ENCODE measurements at regions of chr4 and their contacts with region 1.

Region 1: GRCh38 chr4:142846729-142847596 is 862 bp upstream of the INPP4B start:
- DNase-seq: peak; percentile 72 to 79 (median 75)
- H3K4me3 ChIP-seq: peak overlapping the region; percentile 73 to 77
- H3K4me3 Mint-ChIP-seq: peak overlapping the region; percentile 83 to 94 (median 89)
- H3K27ac ChIP-seq: no peak overlapping the region
- H3K27ac Mint-ChIP-seq: peak overlapping the region in 4 of 7 donors; percentile 23 to 66 (median 44)
- H3K4me1 ChIP-seq: peaks cover 12% of the 10 kb centered on the region
- H3K4me1 Mint-ChIP-seq: peaks cover 8 to 18% (median 12%) of the 10 kb centered on the region in 4 donors
- H3K27me3 ChIP-seq: no peaks in the 10 kb centered on the region
- H3K27me3 Mint-ChIP-seq: peaks cover 7 to 14% of the 10 kb centered on the region in 2 donors

Region 2: DNA sequence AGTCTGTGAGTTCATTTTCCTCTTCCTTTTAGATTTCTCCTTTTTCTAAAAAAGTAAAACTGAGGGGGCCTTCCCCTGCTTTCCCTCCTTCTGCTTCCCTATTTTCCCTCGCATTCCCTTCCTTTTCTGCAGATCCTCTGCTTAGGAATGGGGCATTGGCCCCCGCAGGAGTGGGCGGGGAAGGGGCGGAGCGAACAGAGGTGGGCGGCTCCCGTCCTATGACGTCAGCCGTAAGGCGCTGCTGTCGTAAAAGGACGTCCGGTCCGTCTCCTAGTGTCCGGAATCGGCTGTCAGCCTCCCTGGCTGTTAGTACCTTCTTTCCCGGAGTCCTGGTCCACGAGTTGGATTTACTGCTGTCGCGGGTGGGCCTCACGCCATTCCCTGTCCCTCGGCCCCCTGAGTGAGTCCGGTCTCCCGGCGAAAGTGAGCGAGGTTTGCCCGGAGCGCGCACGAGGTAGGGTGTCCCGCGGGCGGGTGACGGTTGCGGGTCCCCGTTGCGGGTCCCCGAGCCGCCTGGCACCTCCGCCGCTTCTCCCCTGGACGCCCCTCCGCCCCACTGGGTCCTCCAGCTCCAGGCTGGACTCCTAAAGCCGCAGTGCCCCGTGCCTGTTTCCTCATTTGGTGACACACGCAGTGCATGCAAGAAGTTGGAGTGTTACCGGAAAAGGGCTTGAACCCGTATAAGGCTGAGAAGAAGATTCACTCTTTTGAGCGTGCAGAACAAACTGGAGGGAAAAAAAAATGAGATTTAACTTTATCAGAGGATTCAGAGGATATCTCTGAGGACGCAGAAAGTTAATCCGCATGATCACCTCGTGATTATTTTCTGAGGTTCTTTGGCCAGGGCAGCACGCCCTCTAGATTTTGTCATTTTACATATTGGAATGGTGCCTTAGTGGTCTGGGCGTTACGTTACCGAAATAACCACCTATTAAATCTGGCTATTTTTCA is 1626.0 kb before region 1 on chr4 and contains the start of gene ZNF330:
- CTCF ChIA-PET with region 1: no interaction called
- POLR2A ChIA-PET with region 1: no interaction called
- intact Hi-C with region 1: loop called (anchors 5 kb)
- DNase-seq: peak; percentile 81 to 92 (median 87)
- H3K4me3 ChIP-seq: peak within 1 kb of the TSS; percentile 42 to 95
- H3K4me3 Mint-ChIP-seq: peak within 1 kb of the TSS; percentile 96 to 99 (median 98)
- H3K27ac ChIP-seq: peak within 1 kb of the TSS; percentile 92
- H3K27ac Mint-ChIP-seq: peak within 1 kb of the TSS; percentile 93 to 99 (median 97)
- H3K4me1 ChIP-seq: peaks cover 22% of the 10 kb centered on the region
- H3K4me1 Mint-ChIP-seq: peaks cover 27 to 49% (median 37%) of the 10 kb centered on the region in 4 donors
- H3K27me3 ChIP-seq: no peaks in the 10 kb centered on the region
- H3K27me3 Mint-ChIP-seq: no peaks in the 10 kb centered on the region
- total RNA-seq, gene ZNF330: 39.8 to 45.3 TPM

Region 3: DNA sequence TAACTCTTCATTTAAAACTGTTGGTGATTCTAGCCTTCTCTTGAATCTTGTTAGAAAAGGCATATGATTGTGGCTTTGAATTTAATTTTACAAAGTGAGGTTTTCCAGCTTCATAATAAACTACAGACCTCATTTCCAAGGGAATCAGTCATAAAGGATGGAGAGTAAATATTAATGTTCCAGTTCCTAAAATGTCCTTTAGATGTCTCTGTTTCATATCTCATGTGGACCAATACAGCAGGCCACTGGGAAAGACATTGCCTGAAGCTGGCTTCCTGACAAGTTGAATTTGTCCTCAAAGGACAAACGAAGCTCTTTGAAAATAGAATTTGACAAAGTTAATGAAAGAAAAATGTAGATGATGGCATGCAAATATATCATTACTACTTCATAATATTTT is 1500.8 kb before region 1 on chr4:
- CTCF ChIA-PET with region 1: interaction called, 12 read pairs
- POLR2A ChIA-PET with region 1: interaction called, 3 read pairs
- intact Hi-C with region 1: no loop called
- DNase-seq: no peak
- H3K4me3 ChIP-seq: no peak overlapping the region
- H3K4me3 Mint-ChIP-seq: no peak overlapping the region
- H3K27ac ChIP-seq: no peak overlapping the region
- H3K27ac Mint-ChIP-seq: no peak overlapping the region
- H3K4me1 ChIP-seq: no peaks in the 10 kb centered on the region
- H3K4me1 Mint-ChIP-seq: no peaks in the 10 kb centered on the region
- H3K27me3 ChIP-seq: no peaks in the 10 kb centered on the region
- H3K27me3 Mint-ChIP-seq: peaks cover 9 to 13% of the 10 kb centered on the region in 2 donors

Region 4: GRCh38 chr4:142126890-142127497 is 720.0 kb before region 1 on chr4:
- CTCF ChIA-PET with region 1: interaction called, 23 read pairs
- POLR2A ChIA-PET with region 1: interaction called, 10 read pairs
- intact Hi-C with region 1: loop called (anchors 1 kb)
- DNase-seq: peak; percentile 61 to 67 (median 65)
- H3K4me3 ChIP-seq: no peak overlapping the region
- H3K4me3 Mint-ChIP-seq: no peak overlapping the region
- H3K27ac ChIP-seq: no peak overlapping the region
- H3K27ac Mint-ChIP-seq: peak overlapping the region in 3 of 7 donors; percentile 54 to 57 (median 54)
- H3K4me1 ChIP-seq: peaks cover 31% of the 10 kb centered on the region
- H3K4me1 Mint-ChIP-seq: peaks cover 19 to 33% (median 26%) of the 10 kb centered on the region in 4 donors
- H3K27me3 ChIP-seq: no peaks in the 10 kb centered on the region
- H3K27me3 Mint-ChIP-seq: no peaks in the 10 kb centered on the region

Region 5: GRCh38 chr4:142719854-142720541 is 127.0 kb before region 1 on chr4:
- CTCF ChIA-PET with region 1: interaction called, 3 read pairs
- POLR2A ChIA-PET with region 1: no interaction called
- intact Hi-C with region 1: loop called (anchors 5 kb)
- DNase-seq: peak in 4 of 5 donors; percentile 54 to 60 (median 57)
- H3K4me3 ChIP-seq: no peak overlapping the region
- H3K4me3 Mint-ChIP-seq: peak overlapping the region in 5 of 8 donors; percentile 19 to 62 (median 49)
- H3K27ac ChIP-seq: no peak overlapping the region
- H3K27ac Mint-ChIP-seq: peak overlapping the region in 5 of 7 donors; percentile 36 to 77 (median 69)
- H3K4me1 ChIP-seq: peaks cover 14% of the 10 kb centered on the region
- H3K4me1 Mint-ChIP-seq: peaks cover 11 to 26% (median 13%) of the 10 kb centered on the region in 4 donors
- H3K27me3 ChIP-seq: no peaks in the 10 kb centered on the region
- H3K27me3 Mint-ChIP-seq: peaks cover 0 to 1% of the 10 kb centered on the region in 2 donors

Region 6: DNA sequence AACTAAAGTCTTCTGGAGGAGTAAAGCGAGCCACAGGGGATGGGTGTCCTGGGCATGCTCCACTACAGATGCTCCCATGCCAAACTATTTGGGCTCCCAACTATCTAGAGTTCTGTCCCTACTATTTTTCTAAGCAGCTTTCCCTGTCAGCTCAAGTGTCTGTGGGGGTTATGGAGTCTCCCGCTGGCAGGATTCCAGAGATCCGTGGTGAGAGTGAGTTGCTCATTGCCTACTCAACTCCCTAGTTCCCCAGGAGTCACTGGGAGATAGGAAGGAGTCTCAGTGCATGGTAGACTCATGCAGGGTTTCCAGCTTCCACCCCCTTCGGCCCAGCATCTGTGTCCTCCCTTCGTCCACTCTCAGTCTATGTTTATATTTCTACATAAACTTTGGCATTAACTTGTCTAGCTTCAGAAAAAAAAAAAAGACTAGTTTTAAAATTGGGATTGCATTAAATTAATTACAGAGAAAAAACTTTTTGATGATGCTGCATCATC is 54.3 kb after region 1 on chr4:
- CTCF ChIA-PET with region 1: no interaction called
- POLR2A ChIA-PET with region 1: no interaction called
- intact Hi-C with region 1: no loop called
- DNase-seq: no peak
- H3K4me3 ChIP-seq: no peak overlapping the region
- H3K4me3 Mint-ChIP-seq: no peak overlapping the region
- H3K27ac ChIP-seq: no peak overlapping the region
- H3K27ac Mint-ChIP-seq: no peak overlapping the region
- H3K4me1 ChIP-seq: no peaks in the 10 kb centered on the region
- H3K4me1 Mint-ChIP-seq: no peaks in the 10 kb centered on the region
- H3K27me3 ChIP-seq: no peaks in the 10 kb centered on the region
- H3K27me3 Mint-ChIP-seq: peaks cover 8 to 9% of the 10 kb centered on the region in 2 donors

Region 7: DNA sequence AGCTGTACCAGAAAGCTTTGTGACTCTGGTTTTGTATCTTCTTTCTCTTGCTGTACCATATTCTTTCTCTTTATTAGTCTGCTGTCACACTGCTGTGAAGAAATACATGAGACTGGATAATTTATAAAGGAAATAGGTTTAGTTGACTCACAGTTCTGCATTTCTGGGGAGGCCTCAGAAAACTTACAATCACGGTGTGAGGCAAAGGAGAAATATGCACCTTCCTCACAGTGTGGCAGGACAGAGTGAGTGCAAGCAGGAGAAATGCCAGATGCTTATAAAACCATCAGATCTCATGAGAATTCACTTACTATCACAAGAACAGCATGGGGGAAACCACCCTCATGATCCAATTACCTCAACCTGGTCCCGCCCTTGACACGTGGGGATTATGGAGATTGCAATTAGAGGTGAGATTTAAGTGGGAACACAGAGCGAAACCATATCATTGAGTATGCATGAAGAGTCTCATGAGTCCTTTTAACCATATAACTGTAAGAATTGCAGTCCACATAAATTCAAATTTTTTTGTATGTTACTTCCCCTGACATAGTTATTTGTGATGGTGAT is 66.6 kb after region 1 on chr4:
- CTCF ChIA-PET with region 1: no interaction called
- POLR2A ChIA-PET with region 1: no interaction called
- intact Hi-C with region 1: no loop called
- DNase-seq: no peak
- H3K4me3 ChIP-seq: no peak overlapping the region
- H3K4me3 Mint-ChIP-seq: no peak overlapping the region
- H3K27ac ChIP-seq: no peak overlapping the region
- H3K27ac Mint-ChIP-seq: no peak overlapping the region
- H3K4me1 ChIP-seq: no peaks in the 10 kb centered on the region
- H3K4me1 Mint-ChIP-seq: no peaks in the 10 kb centered on the region
- H3K27me3 ChIP-seq: no peaks in the 10 kb centered on the region
- H3K27me3 Mint-ChIP-seq: peaks cover 8 to 10% of the 10 kb centered on the region in 2 donors

Measured in CD4-positive, alpha-beta memory T cell (primary cell).